Gastrocnemius medialis (tissue), 4 donors: ENCODE measurements at regions of chr1 and their contacts with region 1.

Region 1: GRCh38 chr1:43706598-43707495 is 489 bp upstream of the ST3GAL3 start:
- DNase-seq: peak; percentile 93
- ATAC-seq: peak; percentile 31 to 89
- H3K4me3 ChIP-seq: peak overlapping the region; percentile 70 to 92 (median 86)
- H3K27ac ChIP-seq: peak overlapping the region; percentile 87 to 97 (median 89)
- H3K4me1 ChIP-seq: peaks cover 26 to 29% of the 10 kb centered on the region in 2 donors
- H3K27me3 ChIP-seq: no peaks in the 10 kb centered on the region
- CTCF ChIP-seq: no peak
- POLR2A ChIP-seq: peak in 1 of 2 donors; percentile 86

Region 2: GRCh38 chr1:43444836-43445235 is 262.0 kb before region 1 on chr1:
- in situ Hi-C with region 1: no loop called
- intact Hi-C with region 1: no loop called
- DNase-seq: no peak
- ATAC-seq: no peak
- H3K4me3 ChIP-seq: no peak overlapping the region
- H3K27ac ChIP-seq: no peak overlapping the region
- H3K4me1 ChIP-seq: no peaks in the 10 kb centered on the region
- H3K27me3 ChIP-seq: no peaks in the 10 kb centered on the region
- CTCF ChIP-seq: no peak
- POLR2A ChIP-seq: no peak

Region 3: GRCh38 chr1:43573066-43573800 is 133.6 kb before region 1 on chr1:
- in situ Hi-C with region 1: no loop called
- intact Hi-C with region 1: no loop called
- DNase-seq: no peak
- ATAC-seq: no peak
- H3K4me3 ChIP-seq: no peak overlapping the region
- H3K27ac ChIP-seq: no peak overlapping the region
- H3K4me1 ChIP-seq: no peaks in the 10 kb centered on the region
- H3K27me3 ChIP-seq: no peaks in the 10 kb centered on the region
- CTCF ChIP-seq: no peak
- POLR2A ChIP-seq: no peak

Region 4: DNA sequence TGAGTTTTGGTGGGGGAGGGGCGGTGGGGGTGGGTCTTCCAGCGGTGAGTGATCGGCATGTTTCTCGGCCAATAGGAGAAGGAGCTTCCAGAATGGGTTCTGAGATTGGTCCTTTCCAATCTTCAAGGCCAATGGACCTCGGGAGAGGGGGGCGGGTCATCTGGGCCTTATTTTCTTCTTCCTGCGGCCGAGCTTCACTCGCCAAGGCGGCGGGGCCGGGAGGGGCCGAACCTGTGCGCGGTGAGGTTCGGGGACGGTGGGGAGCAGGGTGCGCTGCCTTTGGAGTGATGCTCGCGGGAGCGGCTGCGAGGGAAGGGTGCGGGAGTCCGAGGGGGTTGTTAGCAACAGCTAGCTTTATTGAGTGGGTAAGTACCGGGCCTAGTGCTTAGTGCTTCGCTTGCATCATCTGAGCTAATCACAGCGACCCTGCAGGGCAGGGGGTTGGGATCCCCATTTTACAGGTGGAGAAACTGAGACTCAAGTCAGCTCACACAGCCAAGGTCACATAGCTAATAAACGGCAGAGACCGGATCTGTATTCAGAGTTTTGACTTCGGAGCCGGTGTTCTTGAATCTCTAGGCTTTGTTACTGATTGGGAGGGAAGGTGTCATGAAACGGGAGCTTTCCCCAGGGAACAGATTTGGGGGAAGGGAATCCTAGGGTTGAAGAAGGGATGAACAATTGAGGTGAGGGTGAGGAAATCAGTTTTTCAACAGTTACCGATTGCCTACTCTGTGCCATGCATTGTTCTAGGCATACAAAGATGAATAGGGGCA is 56.3 kb before region 1 on chr1:
- in situ Hi-C with region 1: no loop called
- intact Hi-C with region 1: loop called (anchors 5 kb)
- DNase-seq: peak; percentile 97
- ATAC-seq: peak; percentile 97
- H3K4me3 ChIP-seq: peak overlapping the region; percentile 85 to 93 (median 90)
- H3K27ac ChIP-seq: peak overlapping the region; percentile 92 to 99 (median 96)
- H3K4me1 ChIP-seq: peaks cover 15 to 23% of the 10 kb centered on the region in 2 donors
- H3K27me3 ChIP-seq: no peaks in the 10 kb centered on the region
- CTCF ChIP-seq: no peak
- POLR2A ChIP-seq: peak; percentile 92 to 94